Heart right ventricle (tissue), 16 donors: ENCODE measurements at regions of chr1 and their contacts with region 1.

Region 1: DNA sequence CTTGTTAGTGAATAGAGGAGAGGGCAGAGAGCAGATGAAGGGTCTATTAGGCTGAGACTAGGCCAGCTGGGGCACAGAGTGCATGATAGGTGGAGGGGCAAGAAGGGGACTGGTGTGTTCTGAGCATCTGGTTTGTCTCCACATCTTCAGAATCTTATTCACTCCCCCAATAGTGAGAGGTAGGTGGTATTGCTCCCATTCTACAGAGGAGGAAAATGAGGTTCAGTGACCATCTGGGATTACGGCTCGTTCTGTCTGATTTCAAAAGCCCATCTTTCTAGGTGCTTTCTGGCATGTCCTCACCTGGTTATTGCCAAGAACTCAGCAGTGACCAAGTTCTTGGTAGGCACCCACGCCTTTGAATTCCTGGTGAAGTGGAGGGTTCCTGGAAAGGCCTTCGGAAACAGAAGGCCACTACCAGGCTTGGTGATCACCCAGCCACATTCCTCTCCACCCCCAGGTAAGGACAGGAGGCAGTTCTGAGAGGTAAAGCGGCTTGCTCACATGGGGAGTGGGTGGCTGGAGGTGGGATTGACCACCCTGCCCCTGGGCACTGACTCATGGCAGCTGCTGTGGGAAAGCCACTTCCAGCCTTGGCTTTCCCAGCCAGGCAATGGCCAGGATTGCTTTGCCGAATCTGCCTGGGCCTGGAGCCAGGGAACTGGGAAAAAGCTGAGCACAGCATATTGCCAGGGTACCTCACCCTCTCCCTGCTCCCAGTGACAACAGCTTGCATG is 18.8 kb upstream of the CITED4 start:
- DNase-seq: no peak
- ATAC-seq: no peak
- H3K4me3 ChIP-seq: no peak overlapping the region
- H3K27ac ChIP-seq: no peak overlapping the region
- H3K4me1 ChIP-seq: peaks cover 0 to 33% (median 10%) of the 10 kb centered on the region in 9 donors
- H3K27me3 ChIP-seq: peaks cover 7 to 38% (median 23%) of the 10 kb centered on the region in 7 donors
- CTCF ChIP-seq: no peak

Region 2: GRCh38 chr1:40915581-40915980 is 34.6 kb after region 1 on chr1:
- intact Hi-C with region 1: loop called in 1 of 10 experiments (anchors 2 kb)
- DNase-seq: no peak
- ATAC-seq: no peak
- H3K4me3 ChIP-seq: no peak overlapping the region
- H3K27ac ChIP-seq: no peak overlapping the region
- H3K4me1 ChIP-seq: no peaks in the 10 kb centered on the region
- H3K27me3 ChIP-seq: no peaks in the 10 kb centered on the region
- CTCF ChIP-seq: no peak